IMR-90 (cell line): ENCODE measurements at regions of chr1 and their contacts with region 1.

Region 1: DNA sequence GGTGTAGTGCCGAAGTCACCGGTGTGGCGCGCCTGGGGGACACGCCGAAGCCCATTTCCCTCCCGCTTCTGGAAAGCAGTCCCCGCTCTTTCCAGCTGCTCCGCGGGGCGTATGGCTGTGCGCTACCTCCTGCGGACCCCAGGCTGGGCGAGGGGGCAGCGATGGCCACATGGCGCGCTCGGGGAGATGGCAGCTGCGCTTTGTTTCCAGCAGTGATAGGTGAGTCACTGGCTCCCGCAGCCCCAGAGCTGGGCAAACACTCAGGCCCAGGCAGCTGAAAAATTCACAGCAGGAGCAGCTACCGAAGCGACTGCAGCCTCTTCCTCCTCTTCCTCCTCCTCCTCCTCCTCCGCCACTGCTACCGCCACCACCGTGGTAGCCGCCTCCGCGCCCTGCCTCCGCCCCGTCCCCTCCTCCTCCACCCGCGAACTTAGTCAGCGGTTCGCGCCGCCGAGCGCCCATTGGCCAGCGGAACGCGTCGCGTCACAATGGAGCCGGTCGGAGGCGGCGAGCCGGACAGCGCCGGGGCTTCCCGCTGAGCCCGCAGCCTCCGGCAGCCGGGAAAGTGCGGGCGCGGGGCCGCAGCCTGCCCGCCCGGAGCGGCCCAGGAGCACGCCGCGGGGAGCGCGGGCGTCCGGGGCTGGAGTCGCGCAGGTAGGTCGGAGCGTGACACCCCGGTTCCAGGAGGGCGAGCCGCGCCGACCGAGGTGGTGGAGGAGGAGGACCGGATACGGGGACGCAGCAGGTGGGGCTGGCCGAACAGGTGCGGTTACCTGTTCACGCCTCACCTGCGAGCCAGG is at the start of gene LRRC8B:
- DNase-seq: peak; percentile 71
- ATAC-seq: peak; percentile 99
- H3K4me3 ChIP-seq: peak within 1 kb of the TSS; percentile 62
- H3K27ac ChIP-seq: no peak within 1 kb of the TSS; the same call in 1 of the 2 replicates
- H3K4me1 ChIP-seq: peaks cover 2% of the 10 kb centered on the region; the same call in 1 of the 2 replicates
- H3K27me3 ChIP-seq: peaks cover 2% of the 10 kb centered on the region; the same call in 1 of the 2 replicates
- CTCF ChIP-seq: no peak
- POLR2A ChIP-seq: no peak
- RAD21 ChIP-seq: no peak
- total RNA-seq, gene LRRC8B: 1.4 and 1.8 TPM in 2 replicates

Region 2: DNA sequence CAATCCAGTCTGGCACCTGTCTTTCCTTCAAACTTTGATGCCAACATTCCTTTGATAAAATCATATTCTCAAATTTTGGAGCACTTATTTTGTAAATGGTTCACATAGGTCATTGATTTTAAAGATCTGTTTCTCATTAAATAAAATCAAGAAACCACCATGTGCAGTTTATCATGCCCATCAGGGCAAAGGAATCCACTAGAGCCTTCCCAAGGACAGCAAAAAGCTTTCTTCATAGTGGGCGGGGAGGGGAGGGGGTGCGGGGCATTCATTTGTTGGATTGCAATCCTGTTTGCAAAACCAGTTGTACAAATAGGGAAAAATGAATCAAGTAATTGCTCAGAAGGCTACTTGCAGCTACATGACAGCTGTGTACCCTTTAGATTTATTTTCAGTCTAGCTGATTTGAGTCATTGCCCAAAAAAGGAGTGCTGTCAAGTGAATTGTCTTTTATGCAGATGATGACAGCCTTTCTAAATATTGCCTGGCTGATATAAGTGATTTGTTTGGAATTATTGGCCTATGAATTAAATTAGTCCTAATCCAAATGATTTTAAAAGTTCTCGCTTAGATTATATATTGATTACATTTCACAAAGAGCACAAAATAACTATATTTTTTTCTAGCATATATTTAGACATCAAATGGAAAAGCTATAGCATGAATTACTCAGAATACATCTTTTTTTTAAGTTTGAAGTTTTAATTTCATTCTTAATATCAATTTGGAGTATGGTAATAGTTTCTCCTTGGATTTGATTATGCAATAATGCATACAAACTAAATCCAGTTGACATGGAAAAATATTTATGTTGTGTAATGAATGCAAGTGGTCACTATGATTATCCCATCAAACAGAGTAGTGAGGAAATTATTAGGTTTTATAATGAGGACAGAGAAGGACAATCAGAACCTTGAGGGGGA is 23.3 kb after region 1 on chr1:
- CTCF ChIA-PET with region 1: no interaction called
- POLR2A ChIA-PET with region 1: no interaction called
- dilution Hi-C with region 1: no loop called
- in situ Hi-C with region 1: no loop called
- intact Hi-C with region 1: no loop called
- DNase-seq: peak; percentile 27
- ATAC-seq: no peak
- H3K4me3 ChIP-seq: no peak overlapping the region
- H3K27ac ChIP-seq: no peak overlapping the region
- H3K4me1 ChIP-seq: no peaks in the 10 kb centered on the region
- H3K27me3 ChIP-seq: no peaks in the 10 kb centered on the region
- CTCF ChIP-seq: no peak
- POLR2A ChIP-seq: no peak
- RAD21 ChIP-seq: no peak

Region 3: GRCh38 chr1:89590415-89591080 is 66.0 kb after region 1 on chr1:
- CTCF ChIA-PET with region 1: no interaction called
- POLR2A ChIA-PET with region 1: no interaction called
- dilution Hi-C with region 1: no loop called
- in situ Hi-C with region 1: no loop called
- intact Hi-C with region 1: loop called (anchors 1 kb)
- DNase-seq: no peak
- ATAC-seq: no peak
- H3K4me3 ChIP-seq: no peak overlapping the region
- H3K27ac ChIP-seq: no peak overlapping the region
- H3K4me1 ChIP-seq: 0 out of 2 replicates have a peak, but pooled peaks cover 2% of the 10 kb centered on the region
- H3K27me3 ChIP-seq: no peaks in the 10 kb centered on the region
- CTCF ChIP-seq: no peak
- POLR2A ChIP-seq: no peak
- RAD21 ChIP-seq: no peak

Region 4: GRCh38 chr1:89598450-89599331 is 74.1 kb after region 1 on chr1:
- CTCF ChIA-PET with region 1: no interaction called
- POLR2A ChIA-PET with region 1: no interaction called
- dilution Hi-C with region 1: no loop called
- in situ Hi-C with region 1: no loop called
- intact Hi-C with region 1: loop called (anchors 2 kb)
- DNase-seq: peak; percentile 39
- ATAC-seq: peak; percentile 88
- H3K4me3 ChIP-seq: no peak overlapping the region
- H3K27ac ChIP-seq: no peak overlapping the region
- H3K4me1 ChIP-seq: 0 out of 2 replicates have a peak, but pooled peaks cover 2% of the 10 kb centered on the region
- H3K27me3 ChIP-seq: no peaks in the 10 kb centered on the region
- CTCF ChIP-seq: peak; percentile 69
- POLR2A ChIP-seq: no peak
- RAD21 ChIP-seq: peak; percentile 60